CD4-positive, alpha-beta T cell (primary cell): ENCODE measurements at regions of chr5 and their contacts with region 1.

Region 1: GRCh38 chr5:64221911-64222310 is 56.3 kb downstream of the RNF180 start:
- DNase-seq: no peak
- ATAC-seq: no peak
- H3K4me3 ChIP-seq: no peak overlapping the region
- H3K4me3 Mint-ChIP-seq: no peak overlapping the region
- H3K27ac ChIP-seq: no peak overlapping the region
- H3K27ac Mint-ChIP-seq: no peak overlapping the region
- H3K4me1 ChIP-seq: no peaks in the 10 kb centered on the region
- H3K4me1 Mint-ChIP-seq: no peaks in the 10 kb centered on the region
- H3K27me3 ChIP-seq: no peaks in the 10 kb centered on the region
- H3K27me3 Mint-ChIP-seq: no peaks in the 10 kb centered on the region
- CTCF ChIP-seq: no peak

Region 2: GRCh38 chr5:64207978-64208377 is 13.9 kb before region 1 on chr5:
- CTCF ChIA-PET with region 1: no interaction called
- POLR2A ChIA-PET with region 1: no interaction called
- intact Hi-C with region 1: loop called in 1 of 2 experiments (anchors 2 kb)
- DNase-seq: no peak
- ATAC-seq: no peak
- H3K4me3 ChIP-seq: no peak overlapping the region
- H3K4me3 Mint-ChIP-seq: no peak overlapping the region
- H3K27ac ChIP-seq: no peak overlapping the region
- H3K27ac Mint-ChIP-seq: no peak overlapping the region
- H3K4me1 ChIP-seq: no peaks in the 10 kb centered on the region
- H3K4me1 Mint-ChIP-seq: no peaks in the 10 kb centered on the region
- H3K27me3 ChIP-seq: no peaks in the 10 kb centered on the region
- H3K27me3 Mint-ChIP-seq: no peaks in the 10 kb centered on the region
- CTCF ChIP-seq: no peak